ENCODE measurements at regions of chr15 and their contacts with region 1.

Region 1: DNA sequence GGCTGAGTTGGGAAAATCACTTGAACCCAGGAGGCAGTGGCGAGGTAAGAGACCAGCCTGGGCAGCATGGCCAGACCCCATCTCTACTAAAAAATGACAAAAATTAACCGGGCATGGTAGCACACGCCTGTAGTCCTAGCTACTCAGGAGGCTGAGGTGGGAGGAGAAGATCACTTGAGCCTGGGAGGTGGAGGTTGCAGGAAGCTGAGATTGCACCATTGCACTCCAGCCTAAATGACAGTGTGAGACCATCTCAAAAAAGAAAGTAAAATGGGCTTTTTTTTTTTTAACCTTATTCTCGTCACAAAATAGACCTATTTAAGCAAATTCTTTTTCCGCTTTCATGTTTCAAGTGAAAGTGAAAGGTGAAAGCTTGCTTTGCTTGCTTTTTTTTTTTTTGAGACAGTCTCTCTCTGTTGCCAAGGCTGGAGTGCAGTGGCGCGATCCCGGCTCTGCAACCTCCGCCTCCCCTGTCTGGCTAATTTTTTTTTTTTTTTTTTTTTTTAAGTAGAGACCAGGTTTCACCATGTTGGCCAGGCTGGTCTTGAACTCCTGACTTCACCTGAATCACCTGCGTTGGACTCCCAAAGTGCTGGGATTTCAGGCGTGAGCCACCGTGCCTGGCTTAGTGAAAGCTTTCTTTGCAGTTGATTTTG is 3.6 kb downstream of the PDIA3 start:
- DNase-seq: peak in 8 of 9 donors; percentile 38 to 84 (median 77)
- ATAC-seq: peak; percentile 59
- H3K4me3 ChIP-seq: peak overlapping the region; percentile 53
- H3K4me3 Mint-ChIP-seq: peak overlapping the region; percentile 75 to 97 (median 82)
- H3K27ac ChIP-seq: peak overlapping the region; percentile 75
- H3K27ac Mint-ChIP-seq: peak overlapping the region; percentile 77 to 92 (median 90)
- H3K4me1 ChIP-seq: peaks cover 30 to 43% of the 10 kb centered on the region in 2 donors
- H3K4me1 Mint-ChIP-seq: peaks cover 37 to 66% (median 54%) of the 10 kb centered on the region in 7 donors
- H3K27me3 ChIP-seq: no peaks in the 10 kb centered on the region
- H3K27me3 Mint-ChIP-seq: no peaks in the 10 kb centered on the region

Region 2: DNA sequence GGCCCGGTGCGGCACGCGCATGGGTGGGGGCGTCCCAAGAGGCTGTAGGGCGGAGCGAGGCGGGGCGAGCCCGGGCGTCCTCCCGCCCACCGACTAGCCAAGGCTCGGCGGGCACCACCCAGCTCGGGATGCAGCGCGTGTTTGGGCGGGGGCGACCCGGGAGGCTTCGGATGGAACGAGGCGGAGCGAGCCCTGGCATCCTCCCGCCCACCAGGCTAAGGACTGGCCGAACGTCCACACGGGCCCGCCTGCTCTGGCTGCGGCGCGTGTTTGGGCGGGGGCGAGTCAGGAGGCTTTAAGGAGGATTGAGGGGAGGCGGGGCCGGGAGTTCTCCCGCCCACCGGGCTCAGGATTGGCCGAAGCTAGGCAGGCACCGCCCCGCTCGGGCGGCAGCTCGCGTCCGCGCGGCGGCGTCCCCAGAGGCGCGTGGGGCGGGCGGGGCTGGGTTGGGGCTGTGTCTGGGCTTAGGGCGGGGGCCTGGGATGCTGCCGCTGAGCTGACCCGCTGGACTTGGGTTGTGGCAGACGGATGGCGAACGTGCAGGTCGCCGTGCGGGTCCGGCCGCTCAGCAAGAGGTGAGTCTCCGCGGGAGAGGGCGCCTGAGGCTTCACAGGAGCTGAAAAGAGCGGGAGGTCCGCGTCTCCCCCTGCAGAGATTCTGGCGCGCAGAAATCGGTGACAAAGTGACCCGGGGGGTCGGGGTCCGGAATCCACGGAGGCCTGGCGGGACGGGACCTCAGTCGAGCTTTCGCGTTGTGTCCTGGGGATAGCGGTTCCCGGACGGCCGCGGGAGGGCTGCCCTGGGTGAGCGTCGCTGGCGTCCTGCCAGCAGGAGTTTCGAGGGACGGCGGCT is 1174.4 kb before region 1 on chr15 and contains the start of gene STARD9:
- CTCF ChIA-PET with region 1: no interaction called
- POLR2A ChIA-PET with region 1: no interaction called
- intact Hi-C with region 1: loop called in 1 of 2 experiments (anchors 5 kb)
- DNase-seq: peak; percentile 84 to 96 (median 93)
- ATAC-seq: peak; percentile 96
- H3K4me3 ChIP-seq: peak within 1 kb of the TSS; percentile 81
- H3K4me3 Mint-ChIP-seq: peak within 1 kb of the TSS; percentile 74 to 95 (median 92)
- H3K27ac ChIP-seq: peak within 1 kb of the TSS; percentile 58
- H3K27ac Mint-ChIP-seq: peak within 1 kb of the TSS; percentile 10 to 84 (median 76)
- H3K4me1 ChIP-seq: peaks cover 7 to 12% of the 10 kb centered on the region in 2 donors
- H3K4me1 Mint-ChIP-seq: peaks cover 14 to 36% (median 19%) of the 10 kb centered on the region in 7 donors
- H3K27me3 ChIP-seq: no peaks in the 10 kb centered on the region
- H3K27me3 Mint-ChIP-seq: peaks cover 6 to 35% (median 13%) of the 10 kb centered on the region in 5 donors
- total RNA-seq, gene STARD9: 2.4 to 10.5 (median 4.5) TPM

Region 3: DNA sequence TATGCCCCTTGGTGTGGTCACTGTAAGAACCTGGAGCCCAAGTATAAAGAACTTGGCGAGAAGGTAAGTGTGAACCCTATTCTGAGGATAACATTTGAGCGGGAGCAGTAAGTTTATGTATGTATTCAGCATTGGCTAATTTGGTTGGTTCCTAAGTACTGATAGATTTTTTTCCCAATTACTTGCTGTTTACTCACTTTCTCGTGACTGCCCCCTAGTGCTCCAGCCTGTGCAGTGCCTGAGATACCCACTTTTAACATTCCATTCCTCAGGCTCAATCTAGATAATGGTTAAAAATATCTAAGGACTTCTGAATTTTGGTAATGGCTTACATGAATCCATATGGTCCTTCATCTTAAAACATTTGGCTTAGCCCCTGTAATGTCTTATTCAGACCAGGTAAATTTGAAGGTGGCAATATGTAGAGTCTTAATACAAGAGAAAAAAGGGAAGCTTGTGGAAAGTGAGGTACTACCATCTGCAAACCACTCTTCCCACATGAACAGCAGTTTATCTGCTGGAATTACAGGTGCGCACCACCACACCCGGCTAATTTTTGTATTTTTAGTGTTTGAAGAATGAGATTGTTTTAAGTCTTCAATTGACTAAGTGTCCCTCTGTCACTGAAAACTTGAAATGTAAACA is 19.9 kb after region 1 on chr15:
- CTCF ChIA-PET with region 1: no interaction called
- POLR2A ChIA-PET with region 1: interaction called, 7 read pairs
- intact Hi-C with region 1: loop called (anchors 1 to 2 kb)
- DNase-seq: peak in 8 of 9 donors; percentile 28 to 59 (median 50)
- ATAC-seq: peak; percentile 87
- H3K4me3 ChIP-seq: no peak overlapping the region
- H3K4me3 Mint-ChIP-seq: no peak overlapping the region
- H3K27ac ChIP-seq: peak overlapping the region; percentile 28
- H3K27ac Mint-ChIP-seq: peak overlapping the region in 6 of 9 donors; percentile 28 to 77 (median 57)
- H3K4me1 ChIP-seq: no peaks in the 10 kb centered on the region
- H3K4me1 Mint-ChIP-seq: peaks cover 0 to 8% (median 5%) of the 10 kb centered on the region in 7 donors
- H3K27me3 ChIP-seq: no peaks in the 10 kb centered on the region
- H3K27me3 Mint-ChIP-seq: no peaks in the 10 kb centered on the region

Region 4: DNA sequence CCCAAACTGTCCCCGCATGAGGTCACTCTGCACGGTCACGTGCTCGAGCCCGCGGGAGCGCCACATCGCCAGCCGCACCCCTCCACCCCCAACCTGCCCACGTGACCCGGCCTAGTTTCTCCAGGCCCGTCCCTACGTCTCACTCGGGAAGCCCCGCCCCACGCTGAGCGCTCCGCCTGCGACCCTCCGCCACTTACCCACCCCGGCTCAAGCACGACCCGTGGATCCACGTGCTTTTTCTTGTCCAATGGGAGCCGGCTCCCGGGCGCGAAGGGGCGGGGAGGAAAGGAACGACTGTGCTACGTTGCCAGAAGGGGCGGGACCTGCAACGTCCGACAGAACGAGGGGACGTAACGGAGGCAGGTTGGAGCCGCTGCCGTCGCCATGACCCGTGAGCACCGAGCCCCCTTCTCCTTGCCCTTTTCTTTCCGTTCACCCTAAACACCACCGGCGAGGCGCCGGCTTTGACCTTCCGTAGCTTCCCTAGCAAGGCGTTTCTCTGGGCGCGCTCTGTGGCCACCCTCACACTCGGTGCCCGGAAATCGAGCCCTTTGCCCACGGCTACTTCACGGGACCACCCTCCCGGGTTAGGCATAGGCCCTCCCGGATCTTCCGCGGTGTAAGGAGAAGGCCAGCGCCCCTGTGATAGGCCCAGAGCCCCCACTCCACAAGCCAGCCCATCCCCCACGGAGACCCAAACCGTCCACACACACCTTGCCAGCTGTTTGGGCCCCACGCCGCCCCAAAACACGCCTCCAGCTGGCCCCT is 42.4 kb after region 1 on chr15 and contains the start of gene SERF2:
- CTCF ChIA-PET with region 1: no interaction called
- POLR2A ChIA-PET with region 1: interaction called, 13 read pairs
- intact Hi-C with region 1: loop called (anchors 1 to 5 kb)
- DNase-seq: peak; percentile 92 to 99 (median 97)
- ATAC-seq: peak; percentile 97
- H3K4me3 ChIP-seq: peak within 1 kb of the TSS; percentile 98
- H3K4me3 Mint-ChIP-seq: peak within 1 kb of the TSS; percentile 93 to 98 (median 96)
- H3K27ac ChIP-seq: peak within 1 kb of the TSS; percentile 100
- H3K27ac Mint-ChIP-seq: peak within 1 kb of the TSS; percentile 91 to 99 (median 98)
- H3K4me1 ChIP-seq: peaks cover 9 to 22% of the 10 kb centered on the region in 2 donors
- H3K4me1 Mint-ChIP-seq: peaks cover 33 to 54% (median 48%) of the 10 kb centered on the region in 7 donors
- H3K27me3 ChIP-seq: no peaks in the 10 kb centered on the region
- H3K27me3 Mint-ChIP-seq: peaks cover 0 to 2% (median 0%) of the 10 kb centered on the region in 5 donors
- total RNA-seq, gene SERF2: 358 to 676 (median 553) TPM

Region 5: GRCh38 chr15:43824302-43825246 is 74.8 kb after region 1 on chr15 and contains the start of gene MFAP1:
- CTCF ChIA-PET with region 1: no interaction called
- POLR2A ChIA-PET with region 1: interaction called, 4 read pairs
- intact Hi-C with region 1: loop called (anchors 1 kb)
- DNase-seq: peak; percentile 63 to 94 (median 89)
- ATAC-seq: peak; percentile 94
- H3K4me3 ChIP-seq: peak within 1 kb of the TSS; percentile 100
- H3K4me3 Mint-ChIP-seq: peak within 1 kb of the TSS; percentile 94 to 100 (median 98)
- H3K27ac ChIP-seq: peak within 1 kb of the TSS; percentile 97
- H3K27ac Mint-ChIP-seq: peak within 1 kb of the TSS; percentile 95 to 99 (median 98)
- H3K4me1 ChIP-seq: peaks cover 32 to 34% of the 10 kb centered on the region in 2 donors
- H3K4me1 Mint-ChIP-seq: peaks cover 37 to 81% (median 53%) of the 10 kb centered on the region in 7 donors
- H3K27me3 ChIP-seq: no peaks in the 10 kb centered on the region
- H3K27me3 Mint-ChIP-seq: no peaks in the 10 kb centered on the region
- total RNA-seq, gene MFAP1: 8.5 to 37.3 (median 21.8) TPM

Region 6: GRCh38 chr15:44157685-44158099 is 407.9 kb after region 1 on chr15:
- CTCF ChIA-PET with region 1: no interaction called
- POLR2A ChIA-PET with region 1: no interaction called
- intact Hi-C with region 1: no loop called
- DNase-seq: no peak
- ATAC-seq: no peak
- H3K4me3 ChIP-seq: no peak overlapping the region
- H3K4me3 Mint-ChIP-seq: no peak overlapping the region
- H3K27ac ChIP-seq: no peak overlapping the region
- H3K27ac Mint-ChIP-seq: no peak overlapping the region
- H3K4me1 ChIP-seq: no peaks in the 10 kb centered on the region
- H3K4me1 Mint-ChIP-seq: no peaks in the 10 kb centered on the region
- H3K27me3 ChIP-seq: no peaks in the 10 kb centered on the region
- H3K27me3 Mint-ChIP-seq: peaks cover 29 to 35% (median 31%) of the 10 kb centered on the region in 5 donors

Measured in naive thymus-derived CD4-positive, alpha-beta T cell (primary cell).